ENCODE measurements at regions of chr2 and their contacts with region 1.

Region 1: GRCh38 chr2:36355151-36355889 is at the start of gene CRIM1:
- DNase-seq: peak; percentile 69
- H3K4me3 Mint-ChIP-seq: peak within 1 kb of the TSS; percentile 73
- H3K27ac Mint-ChIP-seq: no peak within 1 kb of the TSS
- H3K4me1 Mint-ChIP-seq: peaks cover 35% of the 10 kb centered on the region
- H3K27me3 Mint-ChIP-seq: peaks cover 40% of the 10 kb centered on the region
- total RNA-seq, gene CRIM1: 5.3 to 5.5 TPM

Region 2: DNA sequence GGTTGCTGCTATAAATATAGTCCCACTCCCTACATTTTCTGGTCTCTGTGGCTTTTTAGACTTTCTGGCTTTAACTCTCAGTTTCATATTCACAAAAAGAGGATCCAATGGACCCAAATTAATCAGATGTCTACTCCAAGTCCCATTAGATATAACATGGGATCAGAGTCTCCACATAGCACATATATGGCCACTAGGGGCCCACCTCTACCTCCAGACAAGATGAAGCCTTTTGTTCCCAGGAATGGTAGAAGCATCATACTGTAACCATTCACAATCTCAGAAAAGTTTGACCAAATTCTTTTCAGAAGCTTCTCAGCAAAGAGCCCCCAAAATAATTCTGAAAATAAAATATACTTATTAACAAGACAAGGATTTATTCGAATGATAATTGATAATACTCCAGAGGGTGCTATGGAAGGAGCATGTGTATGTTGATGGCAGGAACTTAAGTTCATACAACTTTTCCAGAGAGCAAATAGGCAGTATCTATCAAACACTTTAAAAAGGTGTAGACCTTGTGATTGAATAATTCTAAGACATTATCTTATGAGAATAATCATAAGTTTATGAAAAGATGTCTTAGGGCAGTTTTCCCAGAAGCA is 382.1 kb before region 1 on chr2:
- CTCF ChIA-PET with region 1: interaction called, 4 read pairs
- POLR2A ChIA-PET with region 1: no interaction called
- intact Hi-C with region 1: loop called (anchors 5 kb)
- DNase-seq: no peak
- H3K4me3 Mint-ChIP-seq: no peak overlapping the region
- H3K27ac Mint-ChIP-seq: no peak overlapping the region
- H3K4me1 Mint-ChIP-seq: peaks cover 2% of the 10 kb centered on the region
- H3K27me3 Mint-ChIP-seq: no peaks in the 10 kb centered on the region

Region 3: DNA sequence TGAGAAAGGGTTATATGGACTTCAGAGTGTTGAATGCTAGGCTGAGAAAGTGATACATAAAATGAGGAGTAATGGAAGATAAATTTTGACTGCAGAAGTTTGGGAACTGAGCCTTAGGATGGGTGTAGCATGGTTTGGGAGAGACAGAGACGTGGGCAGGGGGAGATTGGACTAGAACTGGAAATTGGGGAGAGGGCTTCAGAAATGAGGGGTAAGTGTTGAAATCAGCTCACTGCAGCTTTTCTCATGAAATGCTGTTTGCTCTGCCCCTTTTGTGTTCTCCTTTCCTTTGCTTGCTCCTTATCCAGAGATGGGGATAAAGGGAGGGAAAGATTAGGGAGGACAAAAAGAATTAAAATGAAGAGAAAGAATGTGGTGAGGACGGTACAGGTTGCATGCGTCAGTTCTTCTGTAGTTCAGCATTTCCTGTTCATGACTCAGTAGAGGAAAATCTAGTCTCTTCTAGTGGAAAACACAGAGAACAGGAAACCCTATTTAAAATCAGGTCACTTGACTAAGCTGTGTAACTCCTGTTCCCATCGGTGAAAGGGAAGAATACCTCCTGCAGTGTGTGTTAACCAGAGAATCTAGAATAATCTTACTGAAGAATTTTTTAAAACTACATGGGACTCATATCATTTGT is 105.8 kb after region 1 on chr2:
- CTCF ChIA-PET with region 1: interaction called, 4 read pairs
- POLR2A ChIA-PET with region 1: no interaction called
- intact Hi-C with region 1: loop called (anchors 5 kb)
- DNase-seq: no peak
- H3K4me3 Mint-ChIP-seq: no peak overlapping the region
- H3K27ac Mint-ChIP-seq: no peak overlapping the region
- H3K4me1 Mint-ChIP-seq: no peaks in the 10 kb centered on the region
- H3K27me3 Mint-ChIP-seq: no peaks in the 10 kb centered on the region

Region 4: DNA sequence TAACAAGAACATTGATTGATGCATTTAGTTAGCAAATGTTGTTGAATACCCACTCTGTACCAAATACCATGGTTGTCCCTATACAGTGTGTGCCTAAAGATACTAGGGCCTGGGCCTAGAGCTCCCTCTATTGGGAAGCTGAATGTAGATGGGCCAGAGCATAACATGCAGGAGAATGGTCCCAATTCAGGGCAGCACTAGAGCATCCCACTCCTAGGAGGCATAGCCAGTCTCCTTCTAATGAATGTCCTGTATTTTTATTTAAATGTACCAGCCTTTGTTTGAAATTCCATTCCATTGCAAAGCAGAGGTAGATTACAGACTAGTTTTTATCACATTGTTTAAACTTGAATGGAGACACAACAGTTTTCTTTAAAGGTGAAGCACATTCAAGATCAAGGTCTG is 152.1 kb after region 1 on chr2:
- CTCF ChIA-PET with region 1: interaction called, 5 read pairs
- POLR2A ChIA-PET with region 1: no interaction called
- intact Hi-C with region 1: loop called (anchors 1 kb)
- DNase-seq: peak; percentile 48
- H3K4me3 Mint-ChIP-seq: no peak overlapping the region
- H3K27ac Mint-ChIP-seq: no peak overlapping the region
- H3K4me1 Mint-ChIP-seq: no peaks in the 10 kb centered on the region
- H3K27me3 Mint-ChIP-seq: no peaks in the 10 kb centered on the region

Region 5: GRCh38 chr2:36597532-36598377 is 242.4 kb after region 1 on chr2 and contains the start of gene FEZ2:
- CTCF ChIA-PET with region 1: interaction called, 3 read pairs
- POLR2A ChIA-PET with region 1: no interaction called
- intact Hi-C with region 1: loop called (anchors 5 kb)
- DNase-seq: peak; percentile 78
- H3K4me3 Mint-ChIP-seq: peak within 1 kb of the TSS; percentile 93
- H3K27ac Mint-ChIP-seq: peak within 1 kb of the TSS; percentile 83
- H3K4me1 Mint-ChIP-seq: peaks cover 31% of the 10 kb centered on the region
- H3K27me3 Mint-ChIP-seq: no peaks in the 10 kb centered on the region
- total RNA-seq, gene FEZ2: 6.8 to 9.3 TPM

Region 6: GRCh38 chr2:36663851-36664695 is 308.8 kb after region 1 on chr2:
- CTCF ChIA-PET with region 1: interaction called, 9 read pairs
- POLR2A ChIA-PET with region 1: no interaction called
- intact Hi-C with region 1: loop called (anchors 1 kb)
- DNase-seq: peak; percentile 14
- H3K4me3 Mint-ChIP-seq: no peak overlapping the region
- H3K27ac Mint-ChIP-seq: no peak overlapping the region
- H3K4me1 Mint-ChIP-seq: no peaks in the 10 kb centered on the region
- H3K27me3 Mint-ChIP-seq: peaks cover 13% of the 10 kb centered on the region

Region 7: GRCh38 chr2:36785179-36785795 is 430.0 kb after region 1 on chr2:
- CTCF ChIA-PET with region 1: no interaction called
- POLR2A ChIA-PET with region 1: no interaction called
- intact Hi-C with region 1: loop called (anchors 1 kb)
- DNase-seq: peak; percentile 79
- H3K4me3 Mint-ChIP-seq: no peak overlapping the region
- H3K27ac Mint-ChIP-seq: no peak overlapping the region
- H3K4me1 Mint-ChIP-seq: peaks cover 2% of the 10 kb centered on the region
- H3K27me3 Mint-ChIP-seq: peaks cover 14% of the 10 kb centered on the region

Measured in activated CD4-positive, alpha-beta memory T cell treated with anti-CD3 and anti-CD28 coated beads for 36 hours (primary cell).